ENCODE measurements at regions of chr10 and their contacts with region 1.

Region 1: DNA sequence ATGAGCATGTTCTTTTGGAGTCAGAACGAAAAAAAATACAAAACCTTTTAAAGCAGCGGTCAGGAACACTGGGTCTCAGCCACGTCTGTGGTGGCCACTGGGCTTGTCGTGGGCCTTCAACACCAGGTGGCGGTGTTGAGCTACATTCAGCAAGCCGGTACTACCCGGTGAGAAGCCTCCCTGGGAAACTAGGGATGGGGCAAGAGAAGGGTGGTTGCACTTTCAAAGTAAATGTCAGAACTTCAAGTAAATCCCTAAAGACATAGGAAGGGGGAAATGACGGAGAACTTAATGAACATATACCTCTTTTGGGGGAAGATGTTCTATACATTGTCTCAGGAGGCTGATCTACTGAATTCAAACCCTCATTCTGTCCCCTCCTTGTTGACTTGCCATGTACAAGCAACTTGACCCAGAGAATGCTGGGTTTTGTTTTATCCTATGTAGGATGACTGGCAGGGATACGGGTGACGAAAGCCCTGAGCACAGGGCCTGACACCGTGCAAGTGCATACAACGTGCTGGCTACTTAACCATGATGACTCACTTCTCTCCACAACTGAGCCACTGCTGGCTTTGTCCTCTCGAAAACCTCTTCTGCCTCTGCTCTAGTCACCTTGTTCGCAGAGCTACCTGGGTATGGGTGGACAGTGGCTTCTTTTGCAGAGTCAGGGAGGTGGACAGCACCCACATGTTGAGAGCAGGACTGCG is 49.0 kb upstream of the BAMBI start:
- DNase-seq: peak; percentile 86 to 92
- H3K4me3 ChIP-seq: no peak overlapping the region
- H3K4me3 Mint-ChIP-seq: no peak overlapping the region
- H3K27ac Mint-ChIP-seq: no peak overlapping the region
- H3K4me1 ChIP-seq: no peaks in the 10 kb centered on the region
- H3K4me1 Mint-ChIP-seq: peaks cover 6% of the 10 kb centered on the region
- H3K27me3 ChIP-seq: no peaks in the 10 kb centered on the region
- H3K27me3 Mint-ChIP-seq: no peaks in the 10 kb centered on the region
- CTCF ChIP-seq: peak; percentile 98 to 99

Region 2: DNA sequence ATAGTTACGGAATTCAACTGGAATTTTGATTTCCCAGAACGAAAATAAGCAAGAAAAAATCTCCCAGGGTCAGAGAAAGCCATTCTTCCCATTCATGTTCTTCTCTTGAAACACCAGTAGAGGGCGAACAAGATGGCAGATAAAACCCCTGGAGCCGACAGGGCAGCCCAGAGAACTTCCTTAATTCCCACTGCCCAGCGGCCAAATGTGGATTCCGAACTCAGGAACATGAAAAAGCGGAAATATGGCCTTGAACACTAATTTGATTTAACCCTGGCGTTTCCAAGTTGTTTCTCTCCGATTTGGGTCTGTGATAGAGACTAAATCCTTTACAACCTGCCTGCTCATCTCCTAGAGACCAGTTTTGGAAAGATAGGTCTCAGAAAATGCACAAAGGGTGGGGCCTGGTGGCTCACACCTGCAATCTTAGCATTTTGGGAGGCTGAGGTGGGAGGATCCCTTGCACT is 196.1 kb before region 1 on chr10:
- CTCF ChIA-PET with region 1: no interaction called
- POLR2A ChIA-PET with region 1: no interaction called
- intact Hi-C with region 1: loop called (anchors 5 kb)
- DNase-seq: peak; percentile 81 to 83
- H3K4me3 ChIP-seq: no peak overlapping the region
- H3K4me3 Mint-ChIP-seq: peak overlapping the region; percentile 41
- H3K27ac Mint-ChIP-seq: no peak overlapping the region
- H3K4me1 ChIP-seq: no peaks in the 10 kb centered on the region
- H3K4me1 Mint-ChIP-seq: no peaks in the 10 kb centered on the region
- H3K27me3 ChIP-seq: no peaks in the 10 kb centered on the region
- H3K27me3 Mint-ChIP-seq: no peaks in the 10 kb centered on the region
- CTCF ChIP-seq: peak; percentile 94 to 95

Region 3: DNA sequence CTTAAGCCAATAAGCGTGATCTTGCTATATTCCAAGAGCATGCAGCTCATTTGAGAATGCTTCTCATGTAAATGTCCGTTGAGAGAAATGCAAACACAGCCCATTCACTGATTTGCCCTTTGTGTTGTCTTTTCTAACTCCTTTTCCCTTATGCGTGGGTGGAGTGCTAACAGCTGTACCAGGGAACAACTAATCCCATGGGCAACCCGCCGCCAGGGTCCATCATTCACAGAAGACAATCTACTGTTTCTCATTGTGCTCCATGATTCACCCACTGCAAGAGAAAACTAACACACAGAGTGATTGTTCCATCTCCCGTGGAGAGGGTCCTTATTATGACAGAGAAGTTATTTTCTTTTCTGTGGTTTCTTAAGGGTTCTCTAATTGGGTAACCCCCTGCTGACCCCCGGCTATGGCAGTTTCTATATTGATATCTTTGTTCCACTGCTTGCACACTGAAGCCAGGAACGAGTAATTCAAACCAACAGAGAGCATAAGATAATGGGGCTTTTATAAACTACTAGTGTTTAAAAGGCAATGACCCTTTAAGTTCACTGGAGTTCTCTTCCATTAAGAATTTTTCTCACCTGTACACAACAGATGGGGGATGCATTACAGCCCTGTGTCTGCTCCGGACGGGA is 347.7 kb after region 1 on chr10:
- CTCF ChIA-PET with region 1: no interaction called
- POLR2A ChIA-PET with region 1: no interaction called
- intact Hi-C with region 1: no loop called
- DNase-seq: no peak
- H3K4me3 ChIP-seq: no peak overlapping the region
- H3K4me3 Mint-ChIP-seq: no peak overlapping the region
- H3K27ac Mint-ChIP-seq: no peak overlapping the region
- H3K4me1 ChIP-seq: no peaks in the 10 kb centered on the region
- H3K4me1 Mint-ChIP-seq: no peaks in the 10 kb centered on the region
- H3K27me3 ChIP-seq: no peaks in the 10 kb centered on the region
- H3K27me3 Mint-ChIP-seq: no peaks in the 10 kb centered on the region
- CTCF ChIP-seq: no peak

Region 4: GRCh38 chr10:29131952-29132820 is 503.8 kb after region 1 on chr10:
- CTCF ChIA-PET with region 1: interaction called, 3 read pairs
- POLR2A ChIA-PET with region 1: no interaction called
- intact Hi-C with region 1: loop called (anchors 1 kb)
- DNase-seq: no peak
- H3K4me3 ChIP-seq: no peak overlapping the region
- H3K4me3 Mint-ChIP-seq: no peak overlapping the region
- H3K27ac Mint-ChIP-seq: peak overlapping the region; percentile 51
- H3K4me1 ChIP-seq: peaks cover 33% of the 10 kb centered on the region
- H3K4me1 Mint-ChIP-seq: peaks cover 15% of the 10 kb centered on the region
- H3K27me3 ChIP-seq: no peaks in the 10 kb centered on the region
- H3K27me3 Mint-ChIP-seq: no peaks in the 10 kb centered on the region
- CTCF ChIP-seq: no peak

Region 5: DNA sequence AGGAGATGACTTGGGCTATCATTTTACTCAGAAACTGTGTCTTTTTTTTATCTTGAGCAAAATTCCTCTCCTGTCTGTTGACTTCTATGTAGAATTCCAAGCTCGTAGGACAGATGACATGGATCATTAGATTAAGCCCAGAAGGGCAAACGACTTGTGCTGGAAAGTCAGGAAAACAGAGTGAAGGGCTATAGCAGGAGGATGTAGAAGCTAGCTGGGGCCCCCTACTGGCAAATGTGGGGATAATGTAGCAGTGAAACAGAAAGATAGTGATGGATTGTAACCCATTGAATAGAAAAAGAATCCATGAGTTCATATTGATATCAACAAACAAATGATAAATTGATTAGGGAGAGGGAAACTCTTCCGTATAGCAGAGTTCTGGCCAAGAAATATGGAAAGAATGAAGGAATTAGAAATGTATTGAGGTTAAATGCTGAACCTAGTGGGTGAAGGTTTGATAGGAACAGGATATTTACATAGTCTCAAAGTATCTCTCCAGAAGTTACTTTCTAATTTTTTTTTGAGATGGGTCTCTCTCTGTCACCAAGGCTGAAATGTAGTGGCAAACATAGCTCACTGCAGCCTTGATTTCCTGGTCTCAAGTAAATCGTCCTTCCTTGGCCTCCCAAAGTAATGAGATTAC is 764.2 kb after region 1 on chr10:
- CTCF ChIA-PET with region 1: no interaction called
- POLR2A ChIA-PET with region 1: no interaction called
- intact Hi-C with region 1: loop called (anchors 1 kb)
- DNase-seq: peak; percentile 62 to 76
- H3K4me3 ChIP-seq: no peak overlapping the region
- H3K4me3 Mint-ChIP-seq: no peak overlapping the region
- H3K27ac Mint-ChIP-seq: no peak overlapping the region
- H3K4me1 ChIP-seq: no peaks in the 10 kb centered on the region
- H3K4me1 Mint-ChIP-seq: no peaks in the 10 kb centered on the region
- H3K27me3 ChIP-seq: no peaks in the 10 kb centered on the region
- H3K27me3 Mint-ChIP-seq: peaks cover 5% of the 10 kb centered on the region
- CTCF ChIP-seq: peak; percentile 93 to 95

Region 6: DNA sequence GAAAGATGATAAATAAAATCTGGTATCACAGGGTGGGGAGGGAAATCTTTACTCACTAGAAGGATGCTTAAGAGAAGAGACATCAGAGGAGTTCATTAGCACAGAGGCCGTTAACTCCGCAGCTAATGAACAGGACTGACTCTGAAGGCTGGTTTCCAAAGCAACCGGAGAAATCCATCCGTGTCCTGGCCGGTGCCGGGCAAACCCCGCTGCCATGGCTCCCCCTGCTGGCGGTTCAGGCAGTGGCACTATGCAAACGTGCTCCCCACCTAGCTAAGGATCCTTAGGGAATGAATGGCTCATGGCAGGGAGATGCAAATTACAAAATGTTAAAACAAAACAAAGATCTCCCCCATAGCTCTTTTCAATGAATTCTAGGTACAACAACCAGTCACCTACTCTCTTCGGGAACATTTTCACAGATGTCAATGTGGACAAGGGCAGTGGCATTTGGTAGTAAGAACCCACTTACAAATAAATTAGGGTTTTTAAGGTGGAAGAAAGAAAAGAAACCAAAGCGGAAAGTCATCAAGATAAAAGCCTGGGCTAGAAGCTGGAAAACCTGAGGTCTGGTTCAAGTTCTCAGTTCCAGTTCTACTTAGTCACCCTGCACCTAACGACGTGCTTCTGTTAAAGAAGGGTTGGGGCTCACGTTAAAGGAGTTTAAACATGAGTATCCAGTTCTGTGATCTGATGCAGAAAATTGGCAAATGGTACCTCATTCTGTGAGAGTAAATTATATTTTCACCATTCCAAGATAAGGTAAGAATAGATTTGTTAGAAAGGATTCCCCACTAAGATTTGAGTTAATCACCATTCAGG is 868.2 kb after region 1 on chr10:
- CTCF ChIA-PET with region 1: no interaction called
- POLR2A ChIA-PET with region 1: no interaction called
- intact Hi-C with region 1: loop called (anchors 1 kb)
- DNase-seq: peak; percentile 78 to 90
- H3K4me3 ChIP-seq: no peak overlapping the region
- H3K4me3 Mint-ChIP-seq: no peak overlapping the region
- H3K27ac Mint-ChIP-seq: no peak overlapping the region
- H3K4me1 ChIP-seq: no peaks in the 10 kb centered on the region
- H3K4me1 Mint-ChIP-seq: no peaks in the 10 kb centered on the region
- H3K27me3 ChIP-seq: no peaks in the 10 kb centered on the region
- H3K27me3 Mint-ChIP-seq: no peaks in the 10 kb centered on the region
- CTCF ChIP-seq: peak; percentile 98